AG04449 (cell line): ENCODE measurements at regions of chr4 and their contacts with region 1.

Region 1: DNA sequence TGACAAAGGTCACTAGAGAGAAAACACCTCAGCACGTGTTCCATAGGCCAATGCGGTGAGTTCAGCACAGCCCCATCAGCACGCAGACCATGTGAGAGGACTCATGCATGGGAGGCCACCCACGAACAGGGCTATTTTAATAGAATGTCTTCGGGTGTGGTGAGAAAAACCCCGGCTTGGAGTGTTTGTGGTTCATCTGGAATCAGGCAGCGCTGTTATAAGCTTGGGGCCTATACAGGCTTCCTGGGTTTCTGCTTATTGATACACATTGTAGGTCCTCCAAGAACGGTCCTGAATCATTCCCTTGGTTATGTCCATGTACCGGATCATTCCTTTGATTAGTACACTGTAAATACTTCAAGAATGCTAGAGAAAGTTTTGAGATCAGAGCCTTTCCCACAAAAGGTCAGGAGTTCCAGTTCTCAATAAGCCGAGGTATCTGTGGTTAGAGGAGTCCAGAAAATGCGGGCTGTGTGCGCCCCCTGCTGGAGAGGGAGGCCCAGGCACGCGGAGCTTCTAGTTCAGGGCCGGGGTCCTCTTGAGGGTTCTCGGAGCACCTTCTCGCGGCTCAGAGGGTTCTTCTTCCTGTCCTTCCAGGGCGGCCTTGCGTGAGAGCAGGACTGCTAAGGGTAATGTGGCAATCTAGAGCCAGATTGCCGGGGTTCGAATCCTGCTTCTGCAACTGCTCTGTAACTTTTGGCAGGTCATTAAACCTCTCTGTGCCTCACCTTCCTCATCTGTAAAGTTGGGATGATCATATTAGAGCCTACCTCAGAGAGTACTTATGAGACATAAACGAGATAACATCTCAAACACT is 51.8 kb downstream of the TLR10 start:
- DNase-seq: peak; percentile 91
- H3K4me3 ChIP-seq: no peak overlapping the region
- CTCF ChIP-seq: peak; percentile 97

Region 2: DNA sequence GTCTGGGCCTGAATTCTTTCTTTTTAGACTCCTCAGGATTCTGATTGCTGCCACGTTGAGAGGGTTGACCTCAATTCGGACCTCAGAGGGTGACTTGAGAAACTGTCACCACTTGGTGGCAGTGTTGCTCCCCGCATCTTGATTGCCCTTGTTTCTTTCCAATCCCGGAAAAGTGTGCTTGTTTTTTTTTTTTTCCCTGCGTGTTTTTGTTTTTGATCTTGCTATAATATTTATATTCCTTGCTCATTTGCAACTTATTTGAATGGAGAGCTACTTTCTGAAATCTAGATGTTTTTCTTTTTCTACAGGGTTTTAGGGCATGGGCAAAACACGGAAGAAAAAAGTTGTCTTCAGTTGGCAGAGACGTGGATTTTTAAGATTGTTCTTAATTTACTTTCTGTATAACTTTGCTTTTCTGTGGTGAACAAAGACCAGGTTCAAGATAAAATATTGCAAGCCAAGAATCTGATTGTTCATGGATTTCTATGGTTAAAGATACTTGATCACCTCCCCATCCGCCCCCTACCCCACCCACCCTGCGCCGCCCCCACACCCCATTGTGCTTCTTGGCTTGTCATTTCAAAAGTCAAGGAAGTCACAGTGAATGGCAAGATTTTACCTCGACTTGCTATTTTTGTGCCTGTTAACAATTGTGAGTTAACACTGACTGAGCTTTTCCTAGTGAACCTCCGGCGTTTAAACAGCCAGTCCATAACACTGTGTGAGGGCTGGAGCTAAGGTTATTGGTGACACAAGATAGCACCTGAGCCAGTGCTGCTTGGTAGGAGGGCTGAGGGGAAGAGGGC is 668.7 kb before region 1 on chr4:
- CTCF ChIA-PET with region 1: interaction called, 19 read pairs
- POLR2A ChIA-PET with region 1: no interaction called
- DNase-seq: no peak
- H3K4me3 ChIP-seq: no peak overlapping the region
- CTCF ChIP-seq: peak; percentile 62

Region 3: GRCh38 chr4:38174801-38175200 is 556.2 kb before region 1 on chr4:
- CTCF ChIA-PET with region 1: interaction called, 104 read pairs
- POLR2A ChIA-PET with region 1: interaction called, 4 read pairs
- DNase-seq: no peak
- H3K4me3 ChIP-seq: no peak overlapping the region
- CTCF ChIP-seq: no peak

Region 4: DNA sequence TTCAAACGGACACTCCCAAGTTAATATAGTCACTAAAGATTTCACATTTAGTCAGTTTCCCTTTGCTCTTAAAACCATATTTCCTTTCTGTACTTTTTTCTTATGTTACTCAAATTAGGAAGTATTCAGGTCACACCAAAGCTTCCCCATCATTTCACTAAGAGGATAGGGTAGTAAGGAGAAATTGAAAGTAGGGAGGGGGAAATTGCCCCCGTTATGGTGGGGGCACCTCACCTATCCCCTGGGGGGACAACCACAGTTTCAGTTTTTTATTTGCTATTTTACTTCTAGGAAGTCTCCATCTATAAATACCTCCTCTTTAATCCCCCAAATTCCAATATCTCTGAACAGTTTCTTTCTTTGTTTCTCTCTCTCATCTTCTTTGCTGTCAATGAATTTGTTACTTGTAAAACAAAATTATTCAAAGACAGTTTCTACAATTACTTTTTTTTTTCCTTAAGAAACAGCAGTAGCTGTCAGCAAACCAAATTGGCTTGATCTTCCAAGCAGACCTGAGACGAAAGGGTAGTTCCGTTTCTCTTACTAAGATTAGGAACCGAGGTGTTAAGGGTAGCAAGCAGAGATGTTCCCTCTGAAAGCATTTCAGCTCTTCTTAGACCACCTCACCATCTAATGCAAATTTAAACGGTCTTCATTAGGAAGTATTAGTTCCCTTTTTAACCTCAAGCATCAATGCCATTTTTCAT is 227.2 kb before region 1 on chr4:
- CTCF ChIA-PET with region 1: no interaction called
- POLR2A ChIA-PET with region 1: no interaction called
- DNase-seq: no peak
- H3K4me3 ChIP-seq: no peak overlapping the region
- CTCF ChIP-seq: no peak

Region 5: DNA sequence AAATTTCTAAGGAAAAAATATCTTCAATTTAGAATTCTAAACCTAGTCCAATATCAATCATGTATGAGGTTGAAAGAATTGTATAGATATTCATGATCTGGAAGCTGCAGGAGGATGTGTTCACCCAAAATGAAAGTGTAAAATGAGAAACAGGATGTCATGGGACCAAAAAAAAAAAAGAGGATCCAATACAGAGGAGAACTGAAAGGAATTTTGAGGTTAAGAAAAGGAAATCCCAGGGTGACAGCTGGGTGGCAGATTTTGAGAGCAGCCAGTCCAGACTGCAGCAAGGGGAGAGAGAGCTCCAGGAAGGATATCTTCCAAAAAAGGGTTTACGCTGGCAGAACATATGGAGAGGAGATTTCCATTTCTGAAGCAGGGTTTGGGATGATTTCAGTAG is 12.8 kb after region 1 on chr4:
- CTCF ChIA-PET with region 1: interaction called, 37 read pairs
- POLR2A ChIA-PET with region 1: no interaction called
- DNase-seq: no peak
- H3K4me3 ChIP-seq: no peak overlapping the region
- CTCF ChIP-seq: no peak